ENCODE measurements at regions of chr3 and their contacts with region 1.

Region 1: DNA sequence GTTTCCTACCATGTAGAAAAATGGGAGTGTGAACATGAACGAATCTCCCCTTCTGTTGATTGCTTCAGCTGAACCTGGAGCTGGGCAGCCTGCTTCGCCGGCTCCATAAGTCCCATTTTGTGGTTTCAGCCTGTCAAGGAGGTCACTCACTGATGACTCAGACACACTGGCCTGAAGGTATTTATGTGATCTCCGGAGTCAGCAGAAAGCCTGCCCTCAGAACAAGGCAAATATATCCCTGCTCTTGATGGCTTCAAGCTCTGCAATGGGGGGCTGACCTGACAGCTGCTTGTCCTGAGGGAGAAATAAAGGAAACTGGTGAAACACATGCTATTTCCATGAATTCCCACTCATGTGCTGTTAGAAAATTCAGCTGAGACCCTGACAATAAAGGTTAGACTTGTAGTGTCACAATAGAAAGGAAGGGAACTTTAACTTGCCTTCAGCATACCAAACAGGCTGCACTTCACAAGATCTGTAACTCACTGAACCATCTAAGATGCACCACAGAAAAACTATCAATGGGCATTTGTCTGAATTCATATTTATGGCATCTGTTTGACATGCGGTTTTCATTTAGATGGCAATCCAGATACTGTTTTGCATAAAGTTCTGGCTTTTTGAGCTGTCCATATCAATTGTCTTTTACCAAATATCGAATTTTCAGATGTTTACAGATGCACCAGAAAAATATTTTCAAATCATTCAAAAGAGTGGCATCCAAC is 282.0 kb upstream of the VEPH1 start:
- DNase-seq: peak; percentile 82
- H3K4me3 ChIP-seq: no peak overlapping the region
- H3K27ac ChIP-seq: no peak overlapping the region
- H3K4me1 ChIP-seq: peaks cover 45% of the 10 kb centered on the region
- H3K27me3 ChIP-seq: no peaks in the 10 kb centered on the region
- CTCF ChIP-seq: no peak

Region 2: DNA sequence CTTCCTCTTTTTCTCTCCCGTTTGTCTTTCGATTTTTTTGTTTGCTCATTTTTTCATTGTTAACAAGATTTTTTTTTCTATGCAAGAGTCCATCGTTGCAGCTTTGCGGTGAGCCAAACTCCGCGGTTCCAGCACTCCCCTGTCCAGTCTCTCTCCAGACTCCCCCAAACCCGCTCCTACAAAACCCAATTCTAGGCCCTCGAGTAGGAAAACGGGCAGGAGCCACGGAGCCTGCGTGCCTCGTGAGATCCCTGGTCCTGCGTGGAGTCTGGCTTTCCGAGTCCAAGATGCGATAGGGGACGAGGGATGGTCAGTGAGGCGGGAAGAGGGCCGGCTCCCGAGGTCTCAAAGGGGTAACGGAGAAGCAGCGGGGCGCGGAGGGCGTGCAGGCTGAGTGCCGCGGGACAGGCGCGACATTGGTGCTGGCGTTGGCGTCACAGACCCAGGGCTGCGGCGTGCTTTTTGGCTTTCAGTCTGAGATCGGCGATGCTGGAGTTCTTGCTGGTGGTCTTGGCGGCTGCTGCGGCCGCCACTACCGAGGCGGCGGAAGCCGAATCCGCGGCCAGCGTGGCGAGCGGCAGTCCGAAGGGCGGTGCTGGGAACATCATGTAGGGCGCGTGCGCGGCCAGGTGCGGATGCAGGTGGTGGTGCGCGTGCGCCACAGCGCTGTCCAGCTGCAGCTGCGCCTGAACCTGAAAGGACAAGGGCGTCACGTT is 312.5 kb after region 1 on chr3:
- CTCF ChIA-PET with region 1: no interaction called
- dilution Hi-C with region 1: no loop called
- in situ Hi-C with region 1: no loop called
- intact Hi-C with region 1: loop called (anchors 10 kb)
- DNase-seq: peak; percentile 80
- H3K4me3 ChIP-seq: peak overlapping the region; percentile 47 to 84 (median 68)
- H3K27ac ChIP-seq: no peak overlapping the region
- H3K4me1 ChIP-seq: peaks cover 6% of the 10 kb centered on the region
- H3K27me3 ChIP-seq: peaks cover 58% of the 10 kb centered on the region
- CTCF ChIP-seq: no peak

Region 3: DNA sequence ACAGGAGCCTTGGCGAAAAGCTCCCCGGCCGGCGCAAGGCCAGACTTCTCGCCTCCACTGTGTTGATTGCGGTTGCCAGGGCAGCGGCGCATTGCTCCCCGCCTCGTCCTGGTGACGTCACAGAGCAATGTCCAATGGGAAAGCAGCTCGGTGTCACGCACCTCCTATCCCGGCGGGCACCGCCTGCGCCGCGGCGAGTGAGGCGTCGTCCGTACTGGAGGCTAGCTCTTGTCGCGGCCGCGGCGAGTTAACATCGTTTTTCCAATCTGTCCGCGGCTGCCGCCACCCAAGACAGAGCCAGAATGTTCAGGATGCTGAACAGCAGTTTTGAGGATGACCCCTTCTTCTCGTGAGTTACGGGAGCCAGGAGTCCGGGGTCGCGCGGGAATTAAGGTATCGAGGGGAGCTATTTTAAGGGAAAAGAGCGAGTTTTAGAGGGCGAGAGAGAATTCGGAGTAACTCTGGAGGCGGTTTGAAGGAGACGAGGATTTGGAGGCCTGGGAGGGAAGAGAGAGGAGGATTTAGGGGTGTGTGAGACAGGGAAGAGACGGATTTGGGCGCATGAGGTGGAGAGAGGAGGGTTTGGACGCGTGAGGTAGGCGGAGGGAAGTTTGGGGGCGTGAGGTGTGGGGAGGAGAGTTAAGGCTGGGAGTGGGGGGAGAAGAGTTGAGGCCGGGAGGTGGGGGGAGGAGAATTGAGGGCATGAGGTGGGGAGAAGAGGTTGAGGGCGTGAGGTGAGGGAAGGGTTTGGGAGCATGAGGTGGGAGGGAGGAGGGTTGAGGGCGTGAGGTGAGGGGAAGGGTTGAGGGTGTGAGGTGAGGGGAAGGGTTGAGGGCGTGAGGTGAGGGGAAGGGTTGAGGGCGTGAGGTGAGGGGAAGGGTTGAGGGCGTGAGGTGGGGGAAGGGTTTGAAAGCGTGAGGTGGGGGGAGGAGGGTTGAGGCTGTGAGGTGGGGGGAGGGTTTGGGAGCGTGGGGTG is 786.0 kb after region 1 on chr3 and contains the start of gene MLF1:
- CTCF ChIA-PET with region 1: no interaction called
- dilution Hi-C with region 1: no loop called
- in situ Hi-C with region 1: no loop called
- intact Hi-C with region 1: loop called (anchors 2 kb)
- DNase-seq: peak; percentile 94
- H3K4me3 ChIP-seq: peak within 1 kb of the TSS; percentile 48 to 77 (median 58)
- H3K27ac ChIP-seq: peak within 1 kb of the TSS; percentile 84
- H3K4me1 ChIP-seq: peaks cover 3% of the 10 kb centered on the region
- H3K27me3 ChIP-seq: no peaks in the 10 kb centered on the region
- CTCF ChIP-seq: no peak
- total RNA-seq, gene MLF1: 10.2 to 12.7 TPM

Measured in mammary epithelial cell (primary cell).